ENCODE measurements at regions of chr13 and their contacts with region 1.

Region 1: DNA sequence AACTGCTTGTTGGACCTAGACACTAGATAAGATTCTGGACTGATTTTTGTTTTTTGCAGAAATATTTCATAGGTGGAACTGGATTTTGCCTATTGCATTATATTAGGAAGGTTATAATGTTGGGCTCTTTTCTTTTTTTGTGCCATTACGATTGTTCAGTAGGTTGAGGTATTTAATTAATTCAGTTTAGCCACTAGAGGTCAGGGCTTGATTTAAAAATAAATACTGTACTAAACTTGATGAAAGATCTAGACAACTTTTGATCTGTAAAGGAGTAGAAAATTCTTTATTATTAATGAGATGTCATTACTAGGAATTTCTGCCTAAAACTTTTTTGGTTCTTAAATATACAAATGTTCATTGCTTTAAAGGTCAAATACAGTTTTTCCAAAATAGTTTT is 15.2 kb upstream of the SUPT20H start:
- DNase-seq: peak; percentile 34

Region 2: GRCh38 chr13:37595162-37595561 is 520.5 kb after region 1 on chr13:
- in situ Hi-C with region 1: loop called (anchors 25 kb)
- DNase-seq: no peak